T-cell (primary cell): ENCODE measurements at regions of chr16 and their contacts with region 1.

Region 1: GRCh38 chr16:68538880-68539701 is at the start of gene ZFP90:
- DNase-seq: peak; percentile 62 to 89 (median 78)
- ATAC-seq: peak; percentile 90 to 95 (median 94)
- H3K4me3 ChIP-seq: peak within 1 kb of the TSS; percentile 85 to 99
- H3K4me3 Mint-ChIP-seq: peak within 1 kb of the TSS; percentile 92 to 96 (median 95)
- H3K27ac ChIP-seq: peak within 1 kb of the TSS; percentile 89
- H3K27ac Mint-ChIP-seq: peak within 1 kb of the TSS; percentile 98 to 100
- H3K4me1 ChIP-seq: peaks cover 4 to 19% of the 10 kb centered on the region in 2 experiments
- H3K4me1 Mint-ChIP-seq: peaks cover 23 to 31% (median 29%) of the 10 kb centered on the region in 3 donors
- H3K27me3 ChIP-seq: no peaks in the 10 kb centered on the region
- H3K27me3 Mint-ChIP-seq: no peaks in the 10 kb centered on the region
- total RNA-seq, gene ZFP90: 25.9 to 53.6 (median 46.7) TPM

Region 2: GRCh38 chr16:67598527-67598926 is 940.6 kb before region 1 on chr16:
- CTCF ChIA-PET with region 1: no interaction called
- POLR2A ChIA-PET with region 1: interaction called in 1 of 2 experiments, 10 read pairs
- DNase-seq: no peak
- ATAC-seq: no peak
- H3K4me3 ChIP-seq: no peak overlapping the region
- H3K4me3 Mint-ChIP-seq: no peak overlapping the region
- H3K27ac ChIP-seq: no peak overlapping the region
- H3K27ac Mint-ChIP-seq: no peak overlapping the region
- H3K4me1 ChIP-seq: peaks cover 5 to 10% of the 10 kb centered on the region in 2 experiments
- H3K4me1 Mint-ChIP-seq: peaks cover 49 to 60% (median 57%) of the 10 kb centered on the region in 3 donors
- H3K27me3 ChIP-seq: no peaks in the 10 kb centered on the region
- H3K27me3 Mint-ChIP-seq: no peaks in the 10 kb centered on the region

Region 3: GRCh38 chr16:67935402-67936123 is 603.5 kb before region 1 on chr16:
- CTCF ChIA-PET with region 1: no interaction called
- POLR2A ChIA-PET with region 1: interaction called in 1 of 2 experiments, 12 read pairs
- DNase-seq: peak; percentile 82 to 97 (median 95)
- ATAC-seq: peak; percentile 89 to 91 (median 90)
- H3K4me3 ChIP-seq: peak overlapping the region; percentile 95 to 97
- H3K4me3 Mint-ChIP-seq: peak overlapping the region; percentile 98 to 99 (median 99)
- H3K27ac ChIP-seq: peak overlapping the region; percentile 82
- H3K27ac Mint-ChIP-seq: peak overlapping the region; percentile 99
- H3K4me1 ChIP-seq: peaks cover 6 to 47% of the 10 kb centered on the region in 2 experiments
- H3K4me1 Mint-ChIP-seq: peaks cover 38 to 48% (median 44%) of the 10 kb centered on the region in 3 donors
- H3K27me3 ChIP-seq: no peaks in the 10 kb centered on the region
- H3K27me3 Mint-ChIP-seq: no peaks in the 10 kb centered on the region

Region 4: DNA sequence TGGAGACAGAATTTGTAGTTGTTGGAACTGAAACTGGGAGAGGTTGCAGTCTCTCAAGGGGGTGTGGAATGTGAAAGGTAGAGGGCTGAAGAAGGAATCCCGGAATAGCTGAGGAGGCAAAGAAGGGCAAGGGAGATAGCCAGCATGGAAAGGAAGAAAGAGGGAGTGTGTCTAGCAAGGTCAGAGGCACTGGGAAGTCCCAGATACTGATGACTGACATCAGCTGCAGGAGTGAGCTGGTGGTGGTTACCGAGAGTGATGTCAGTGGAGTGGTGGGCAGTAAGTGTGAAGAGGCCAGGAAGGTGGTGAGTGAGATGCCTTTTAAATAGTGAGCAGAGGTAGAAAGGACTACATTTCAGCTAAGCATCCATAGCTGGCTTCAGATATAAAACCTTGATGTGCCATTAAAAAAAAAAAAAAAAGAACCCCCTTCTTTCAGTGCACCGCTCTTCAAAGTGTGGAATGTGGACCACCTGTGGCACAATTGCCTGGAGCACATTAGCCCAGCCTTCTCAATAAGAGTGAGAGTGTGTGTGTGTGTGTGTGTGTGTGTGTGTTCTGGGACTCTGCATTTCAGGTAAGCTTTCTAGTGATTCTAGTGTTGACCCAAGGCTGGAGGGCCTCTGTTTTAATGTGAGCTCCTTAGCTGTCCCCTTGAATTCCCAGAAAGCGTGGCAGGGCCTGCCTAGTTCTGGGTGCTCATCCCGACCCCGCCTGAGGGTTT is 219.7 kb before region 1 on chr16:
- CTCF ChIA-PET with region 1: no interaction called
- POLR2A ChIA-PET with region 1: no interaction called
- DNase-seq: no peak
- ATAC-seq: no peak
- H3K4me3 ChIP-seq: no peak overlapping the region
- H3K4me3 Mint-ChIP-seq: no peak overlapping the region
- H3K27ac ChIP-seq: no peak overlapping the region
- H3K27ac Mint-ChIP-seq: peak overlapping the region; percentile 17 to 26
- H3K4me1 ChIP-seq: peaks cover 0 to under 1% of the 10 kb centered on the region in 2 experiments
- H3K4me1 Mint-ChIP-seq: peaks cover 13 to 28% (median 25%) of the 10 kb centered on the region in 3 donors
- H3K27me3 ChIP-seq: no peaks in the 10 kb centered on the region
- H3K27me3 Mint-ChIP-seq: no peaks in the 10 kb centered on the region

Region 5: GRCh38 chr16:68744369-68745280 is 205.5 kb after region 1 on chr16:
- CTCF ChIA-PET with region 1: no interaction called
- POLR2A ChIA-PET with region 1: no interaction called
- DNase-seq: no peak
- ATAC-seq: no peak
- H3K4me3 ChIP-seq: no peak overlapping the region
- H3K4me3 Mint-ChIP-seq: no peak overlapping the region
- H3K27ac ChIP-seq: no peak overlapping the region
- H3K27ac Mint-ChIP-seq: no peak overlapping the region
- H3K4me1 ChIP-seq: no peaks in the 10 kb centered on the region
- H3K4me1 Mint-ChIP-seq: no peaks in the 10 kb centered on the region
- H3K27me3 ChIP-seq: peaks cover 0 to 17% of the 10 kb centered on the region in 2 experiments
- H3K27me3 Mint-ChIP-seq: peaks cover 4 to 16% of the 10 kb centered on the region in 2 donors